Mammary epithelial cell (primary cell): ENCODE measurements at regions of chr10 and their contacts with region 1.

Region 1: DNA sequence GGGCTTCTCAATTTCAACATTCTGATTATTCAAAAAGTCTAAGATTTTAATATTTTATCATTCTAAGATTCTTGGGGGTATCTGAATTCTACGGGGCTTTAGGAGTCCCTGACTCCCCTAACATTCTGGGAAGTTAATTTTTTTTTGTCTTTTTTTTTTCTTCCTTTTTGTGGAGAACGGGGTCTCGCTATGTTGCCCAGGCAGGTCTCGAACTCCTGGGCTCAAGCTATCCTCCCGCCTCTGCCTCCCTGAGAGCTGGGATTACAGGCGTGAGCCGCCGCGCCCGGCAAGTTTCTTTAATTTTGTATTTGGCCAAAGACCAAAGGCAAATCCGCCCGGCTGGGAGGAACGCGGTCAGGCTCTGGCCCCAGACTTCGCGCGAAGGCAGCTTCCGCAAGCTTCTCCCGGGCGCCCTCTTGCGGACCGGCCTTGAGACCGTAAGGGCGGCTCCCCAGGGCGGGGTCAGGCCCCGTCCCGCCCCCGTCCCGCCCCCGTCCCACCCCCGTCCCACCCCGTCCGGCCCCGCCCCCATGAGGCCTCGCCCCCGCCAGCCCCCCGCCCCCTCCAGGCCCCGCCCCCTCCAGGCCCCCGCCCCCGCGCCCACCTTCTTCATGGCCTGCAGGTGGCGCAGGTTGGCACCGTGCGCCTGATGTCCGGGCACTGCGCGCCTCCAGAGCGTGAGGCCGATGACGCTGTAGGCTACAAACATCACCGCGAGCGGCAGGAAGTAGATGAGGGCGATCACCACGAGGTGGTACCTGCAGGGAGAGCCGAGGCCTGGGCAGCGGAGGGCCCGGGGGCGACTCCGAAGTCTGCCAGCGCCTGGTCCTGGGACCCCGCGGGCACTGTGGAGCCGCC is 8.2 kb downstream of the TACR2 start:
- DNase-seq: peak; percentile 89
- H3K4me3 ChIP-seq: peak overlapping the region in 1 of 3 experiments; percentile 48
- H3K27ac ChIP-seq: peak overlapping the region; percentile 51
- H3K4me1 ChIP-seq: peaks cover 16% of the 10 kb centered on the region
- H3K27me3 ChIP-seq: no peaks in the 10 kb centered on the region
- CTCF ChIP-seq: peak; percentile 9 to 62

Region 2: GRCh38 chr10:68988530-68989316 is 419.8 kb before region 1 on chr10 and contains the start of gene KIFBP:
- CTCF ChIA-PET with region 1: no interaction called
- dilution Hi-C with region 1: no loop called
- in situ Hi-C with region 1: loop called in 1 of 2 experiments (anchors 25 kb)
- intact Hi-C with region 1: no loop called
- DNase-seq: peak; percentile 96
- H3K4me3 ChIP-seq: peak within 1 kb of the TSS; percentile 70 to 83 (median 79)
- H3K27ac ChIP-seq: peak within 1 kb of the TSS; percentile 73
- H3K4me1 ChIP-seq: peaks cover 28% of the 10 kb centered on the region
- H3K27me3 ChIP-seq: no peaks in the 10 kb centered on the region
- CTCF ChIP-seq: peak; percentile 16 to 64
- total RNA-seq, gene KIFBP: 36.0 to 39.3 TPM

Region 3: GRCh38 chr10:69092959-69093850 is 315.3 kb before region 1 on chr10:
- CTCF ChIA-PET with region 1: no interaction called
- dilution Hi-C with region 1: no loop called
- in situ Hi-C with region 1: no loop called
- intact Hi-C with region 1: loop called (anchors 1 kb)
- DNase-seq: peak; percentile 77
- H3K4me3 ChIP-seq: no peak overlapping the region
- H3K27ac ChIP-seq: no peak overlapping the region
- H3K4me1 ChIP-seq: no peaks in the 10 kb centered on the region
- H3K27me3 ChIP-seq: no peaks in the 10 kb centered on the region
- CTCF ChIP-seq: peak; percentile 57 to 77

Region 4: GRCh38 chr10:69237528-69238159 is 170.9 kb before region 1 on chr10:
- CTCF ChIA-PET with region 1: no interaction called
- dilution Hi-C with region 1: no loop called
- in situ Hi-C with region 1: loop called in 1 of 2 experiments (anchors 5 kb)
- intact Hi-C with region 1: loop called (anchors 1 kb)
- DNase-seq: peak; percentile 61
- H3K4me3 ChIP-seq: no peak overlapping the region
- H3K27ac ChIP-seq: no peak overlapping the region
- H3K4me1 ChIP-seq: peaks cover 13% of the 10 kb centered on the region
- H3K27me3 ChIP-seq: no peaks in the 10 kb centered on the region
- CTCF ChIP-seq: peak; percentile 90 to 92

Region 5: DNA sequence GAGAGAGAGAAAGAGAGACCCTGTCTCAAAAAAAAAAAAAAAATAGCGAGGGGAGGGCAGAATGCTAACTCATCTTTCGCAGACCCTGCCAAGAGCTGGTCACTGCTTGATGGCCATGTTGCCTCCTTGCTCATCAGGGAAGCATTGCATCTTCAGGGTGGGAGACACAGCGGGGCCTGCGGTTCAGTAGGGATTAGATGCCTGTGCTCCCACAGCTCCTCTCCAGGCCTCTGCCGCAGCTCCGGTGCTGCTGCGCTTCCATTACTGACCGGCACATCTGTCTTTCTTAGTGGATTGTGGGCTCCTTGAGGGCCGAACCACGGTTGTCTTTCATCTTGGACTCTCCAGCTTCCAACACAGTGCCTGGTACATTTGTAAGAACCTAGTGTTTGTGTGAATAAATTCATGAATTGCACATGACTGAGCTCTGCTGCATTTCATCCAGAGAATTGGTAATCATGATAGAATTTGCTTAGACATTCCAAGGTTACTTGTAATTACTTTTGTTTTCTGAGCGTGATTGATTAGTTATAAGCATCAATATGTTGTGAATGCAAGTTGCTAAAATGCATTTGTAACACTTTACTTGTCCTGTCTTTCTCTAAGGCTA is 113.4 kb before region 1 on chr10:
- CTCF ChIA-PET with region 1: no interaction called
- dilution Hi-C with region 1: no loop called
- in situ Hi-C with region 1: no loop called
- intact Hi-C with region 1: no loop called
- DNase-seq: no peak
- H3K4me3 ChIP-seq: no peak overlapping the region
- H3K27ac ChIP-seq: no peak overlapping the region
- H3K4me1 ChIP-seq: no peaks in the 10 kb centered on the region
- H3K27me3 ChIP-seq: peaks cover 6% of the 10 kb centered on the region
- CTCF ChIP-seq: no peak

Region 6: GRCh38 chr10:69506834-69507721 is 98.5 kb after region 1 on chr10:
- CTCF ChIA-PET with region 1: no interaction called
- dilution Hi-C with region 1: no loop called
- in situ Hi-C with region 1: no loop called
- intact Hi-C with region 1: loop called (anchors 1 kb)
- DNase-seq: no peak
- H3K4me3 ChIP-seq: no peak overlapping the region
- H3K27ac ChIP-seq: no peak overlapping the region
- H3K4me1 ChIP-seq: no peaks in the 10 kb centered on the region
- H3K27me3 ChIP-seq: peaks cover 6% of the 10 kb centered on the region
- CTCF ChIP-seq: no peak